ENCODE measurements at regions of chrX and their contacts with region 1.

Region 1: DNA sequence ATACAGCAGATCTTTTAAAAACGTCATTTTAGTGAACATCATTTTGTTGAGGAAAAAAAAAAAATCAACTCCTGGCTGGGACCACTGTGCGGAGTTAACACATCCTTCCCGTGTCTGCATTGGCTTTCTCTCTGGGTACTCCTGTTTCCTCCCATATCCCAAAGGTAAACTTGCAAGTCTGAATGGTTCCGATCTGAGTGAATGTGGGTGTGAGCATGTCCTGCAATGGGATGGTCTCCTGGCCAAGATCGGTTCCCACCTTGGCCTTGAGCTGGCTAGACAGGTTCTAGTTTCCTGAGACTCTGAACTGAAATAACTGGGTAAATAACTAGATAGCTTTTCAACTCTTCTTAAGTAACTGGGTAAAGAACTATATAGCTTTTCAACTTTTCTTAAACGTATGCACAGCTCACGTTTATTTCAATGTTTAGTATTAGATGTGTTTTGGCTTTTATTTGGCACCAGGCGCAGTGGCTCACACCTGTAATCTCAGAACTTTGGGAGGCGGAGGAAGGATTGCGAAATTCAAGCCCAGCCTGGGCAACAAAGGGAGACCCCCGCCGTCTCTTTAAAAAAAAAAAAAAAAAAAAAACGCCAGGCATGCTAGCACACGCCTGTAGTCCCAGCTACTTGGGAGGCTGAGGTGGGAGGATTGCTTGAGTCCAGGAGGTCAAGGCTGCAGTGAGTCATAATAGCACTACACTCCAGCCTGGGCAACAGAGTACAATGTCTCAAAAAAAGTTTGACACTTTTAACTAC is 14.0 kb downstream of the RBMX start:
- DNase-seq: no peak
- ATAC-seq: no peak
- H3K4me3 ChIP-seq: no peak overlapping the region
- H3K4me3 Mint-ChIP-seq: peak overlapping the region in 1 of 10 donors; percentile 22
- H3K27ac ChIP-seq: no peak overlapping the region
- H3K27ac Mint-ChIP-seq: peak overlapping the region in 5 of 9 donors; percentile 45 to 87 (median 71)
- H3K4me1 ChIP-seq: no peaks in the 10 kb centered on the region
- H3K4me1 Mint-ChIP-seq: peaks cover 5 to 32% (median 26%) of the 10 kb centered on the region in 7 donors
- H3K27me3 ChIP-seq: no peaks in the 10 kb centered on the region
- H3K27me3 Mint-ChIP-seq: no peaks in the 10 kb centered on the region

Region 2: DNA sequence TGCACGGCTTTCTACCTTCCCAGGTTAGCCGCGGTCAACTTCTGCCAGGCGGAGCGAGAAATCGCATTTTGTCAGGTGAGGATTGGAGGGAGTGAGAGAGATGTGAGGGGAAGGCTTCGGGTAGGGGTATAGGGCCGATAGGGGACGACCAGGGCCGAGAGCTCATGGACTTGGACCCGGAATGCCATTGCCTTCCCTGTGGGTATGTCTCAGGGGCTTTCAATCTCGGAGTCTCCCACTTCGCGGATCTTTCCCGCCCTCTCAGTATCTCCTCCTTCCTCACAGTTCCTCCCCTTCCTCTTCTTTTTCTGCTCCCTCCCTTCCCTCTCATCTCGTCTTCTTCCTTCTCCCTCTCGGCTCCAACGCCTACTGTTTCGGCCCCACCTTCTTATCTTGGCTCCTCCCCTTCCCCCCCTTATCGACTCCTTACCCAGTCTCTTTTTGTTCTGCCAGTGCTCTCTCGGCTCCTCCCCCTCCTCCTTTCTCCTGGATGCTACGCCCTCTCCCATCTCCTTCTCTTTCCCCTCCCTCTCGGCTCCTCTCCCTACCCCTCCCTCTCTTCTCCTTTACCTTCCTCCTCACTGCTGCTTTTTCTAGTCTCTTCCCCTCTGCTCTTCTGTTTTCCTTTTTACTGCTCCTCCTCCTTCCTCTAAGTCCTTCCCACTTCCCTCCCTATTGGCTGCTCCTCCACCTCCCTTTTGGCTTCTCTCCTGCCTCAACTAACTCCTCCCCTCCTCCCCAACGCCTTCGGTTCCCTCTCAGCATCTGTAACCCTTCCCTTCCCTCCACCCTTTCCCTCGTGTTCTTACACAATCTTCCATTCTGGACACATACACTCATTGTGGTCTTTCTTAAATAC is 43.4 kb after region 1 on chrX:
- CTCF ChIA-PET with region 1: no interaction called
- POLR2A ChIA-PET with region 1: no interaction called
- intact Hi-C with region 1: loop called in 1 of 2 experiments (anchors 10 kb)
- DNase-seq: peak; percentile 10 to 59 (median 39)
- ATAC-seq: peak; percentile 75
- H3K4me3 ChIP-seq: peak overlapping the region; percentile 84
- H3K4me3 Mint-ChIP-seq: peak overlapping the region; percentile 87 to 97 (median 96)
- H3K27ac ChIP-seq: peak overlapping the region; percentile 89
- H3K27ac Mint-ChIP-seq: peak overlapping the region; percentile 75 to 97 (median 91)
- H3K4me1 ChIP-seq: peaks cover 0 to 7% of the 10 kb centered on the region in 2 donors
- H3K4me1 Mint-ChIP-seq: peaks cover 0 to 22% (median 11%) of the 10 kb centered on the region in 7 donors
- H3K27me3 ChIP-seq: no peaks in the 10 kb centered on the region
- H3K27me3 Mint-ChIP-seq: no peaks in the 10 kb centered on the region

Measured in naive thymus-derived CD4-positive, alpha-beta T cell (primary cell).